ENCODE measurements at regions of chr2 and their contacts with region 1.

Region 1: DNA sequence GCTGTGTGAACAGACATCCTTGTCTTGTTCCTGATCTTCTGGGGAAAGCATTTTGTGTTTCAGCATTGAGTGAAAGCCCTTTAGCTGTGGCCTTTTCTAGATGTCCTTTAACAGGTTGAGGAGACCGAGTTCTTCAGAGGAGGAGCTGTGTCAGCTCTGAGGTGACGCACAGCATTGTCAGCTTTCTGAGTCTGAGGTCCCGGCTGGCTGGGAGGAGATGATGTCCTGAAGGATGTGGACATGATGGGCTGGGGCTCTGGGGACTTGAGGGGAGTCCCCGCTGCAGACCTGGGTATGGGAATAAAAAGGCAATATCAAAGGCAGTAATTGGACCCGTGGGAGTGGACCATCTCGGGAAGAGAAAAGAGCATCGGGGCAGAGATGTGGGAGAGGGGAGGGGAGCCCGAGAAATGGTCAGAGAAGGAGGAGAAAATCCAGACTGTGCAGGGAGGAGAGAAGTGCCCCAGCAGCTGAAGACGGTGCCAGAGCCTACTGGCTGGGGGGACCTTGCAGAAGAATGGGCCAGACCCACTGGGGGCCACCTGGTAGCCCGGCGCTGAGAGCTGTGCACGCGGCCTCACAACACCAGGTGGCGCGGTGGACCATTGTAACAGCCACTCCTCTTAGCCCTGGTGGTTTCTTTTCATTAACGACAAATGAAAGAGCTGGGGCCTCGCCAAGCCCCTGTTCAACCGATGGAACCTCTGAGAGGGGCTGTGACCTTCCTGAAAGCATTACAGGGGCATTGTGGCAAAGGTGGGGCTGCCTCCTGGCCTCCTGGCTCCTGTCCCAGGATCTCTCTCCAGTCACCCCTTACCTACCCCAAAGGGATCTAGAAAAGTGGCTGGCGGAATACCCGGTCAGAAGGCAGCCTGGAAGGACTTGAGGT is 61.6 kb downstream of the ST3GAL5 start:
- DNase-seq: peak; percentile 85
- CTCF ChIP-seq: peak; percentile 94

Region 2: DNA sequence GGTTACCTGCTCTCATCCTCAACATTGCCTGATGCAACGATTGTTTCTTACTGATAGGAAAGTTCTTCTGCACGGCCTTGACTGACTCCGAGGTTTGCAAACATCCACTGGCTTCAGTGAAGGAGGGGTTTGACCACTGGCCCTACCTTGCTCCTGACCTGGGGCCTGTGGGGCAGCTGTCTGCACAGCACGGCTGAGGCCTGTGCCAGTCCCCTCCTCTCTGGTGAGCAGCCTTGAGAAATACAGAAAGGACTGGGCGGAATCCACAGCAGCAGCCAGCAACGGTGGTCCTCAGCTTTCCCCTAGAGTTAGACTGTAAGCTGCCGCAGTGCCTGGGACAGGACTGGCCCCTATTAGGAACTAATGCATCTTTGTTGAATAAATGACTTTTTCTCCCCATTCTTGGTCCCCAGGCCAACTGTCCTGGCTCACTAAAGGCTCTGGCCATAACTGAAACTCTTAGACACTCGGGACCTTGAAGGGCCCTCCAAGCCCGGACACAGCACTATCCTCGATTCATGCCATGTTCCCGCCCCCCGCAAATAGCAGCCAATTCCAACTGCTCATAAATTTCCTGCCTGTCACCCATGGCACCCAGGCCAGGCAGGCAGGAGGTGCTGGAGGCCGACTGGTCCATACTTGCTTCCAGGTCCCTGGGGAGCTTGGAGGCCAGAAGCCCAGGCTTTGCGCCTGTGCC is 46.8 kb before region 1 on chr2:
- CTCF ChIA-PET with region 1: no interaction called
- POLR2A ChIA-PET with region 1: no interaction called
- DNase-seq: no peak
- CTCF ChIP-seq: no peak

Region 3: GRCh38 chr2:85838181-85838580 is 10.9 kb after region 1 on chr2:
- CTCF ChIA-PET with region 1: interaction called, 19 read pairs
- POLR2A ChIA-PET with region 1: no interaction called
- DNase-seq: no peak
- CTCF ChIP-seq: no peak

Region 4: GRCh38 chr2:85888684-85889626 is 61.7 kb after region 1 on chr2 and contains the start of gene ST3GAL5:
- CTCF ChIA-PET with region 1: interaction called, 111 read pairs
- POLR2A ChIA-PET with region 1: no interaction called
- DNase-seq: peak; percentile 94
- CTCF ChIP-seq: peak; percentile 78

Region 5: DNA sequence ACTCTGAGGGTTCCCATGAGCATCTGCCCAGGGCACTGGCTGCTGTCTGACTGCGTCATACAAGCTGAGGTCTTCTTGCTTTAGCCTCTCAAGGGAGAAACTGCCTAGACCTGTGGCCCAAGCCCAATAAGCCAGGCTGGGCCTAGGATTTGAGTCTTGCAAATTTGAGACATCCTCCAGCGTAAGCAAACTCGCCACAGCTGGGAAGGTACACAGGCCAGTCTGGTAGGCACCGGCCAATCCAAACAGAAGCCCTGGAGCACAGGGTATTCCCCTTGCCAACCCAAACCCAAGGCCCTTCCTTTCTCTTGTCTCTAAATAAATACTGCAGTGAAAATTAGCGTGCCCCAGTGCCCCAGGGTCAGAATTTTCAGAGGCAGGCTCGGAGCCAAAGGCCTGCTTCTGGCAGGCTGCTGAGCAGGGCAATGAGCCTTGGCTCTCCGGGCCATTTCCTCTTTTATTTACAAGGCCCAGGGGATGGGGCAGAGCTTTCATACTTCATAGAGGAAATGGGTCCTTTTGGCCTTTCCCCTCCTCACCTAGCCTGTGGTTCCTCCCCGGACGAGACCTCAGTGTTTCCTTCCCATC is 245.1 kb after region 1 on chr2:
- CTCF ChIA-PET with region 1: interaction called, 436 read pairs
- POLR2A ChIA-PET with region 1: no interaction called
- DNase-seq: peak; percentile 57
- CTCF ChIP-seq: no peak

Region 6: GRCh38 chr2:86097114-86097896 is 270.1 kb after region 1 on chr2:
- CTCF ChIA-PET with region 1: interaction called, 10 read pairs
- POLR2A ChIA-PET with region 1: no interaction called
- DNase-seq: no peak
- CTCF ChIP-seq: no peak

Measured in GM10248 (cell line).